ENCODE measurements at regions of chr9 and their contacts with region 1.

Region 1: GRCh38 chr9:97559111-97559514 is 57.6 kb downstream of the TMOD1 start:
- DNase-seq: no peak
- ATAC-seq: no peak
- H3K4me3 ChIP-seq: no peak overlapping the region
- H3K27ac ChIP-seq: peak overlapping the region; percentile 77 to 96 (median 86)
- H3K4me1 ChIP-seq: peaks cover 3 to 86% (median 59%) of the 10 kb centered on the region in 12 donors
- H3K27me3 ChIP-seq: no peaks in the 10 kb centered on the region
- CTCF ChIP-seq: no peak
- POLR2A ChIP-seq: no peak

Region 2: GRCh38 chr9:96859461-96860198 is 699.5 kb before region 1 on chr9:
- intact Hi-C with region 1: no loop called
- DNase-seq: no peak
- ATAC-seq: no peak
- H3K4me3 ChIP-seq: no peak overlapping the region
- H3K27ac ChIP-seq: no peak overlapping the region
- H3K4me1 ChIP-seq: peaks cover 0 to 4% (median 1%) of the 10 kb centered on the region in 12 donors
- H3K27me3 ChIP-seq: no peaks in the 10 kb centered on the region
- CTCF ChIP-seq: no peak
- POLR2A ChIP-seq: no peak

Region 3: DNA sequence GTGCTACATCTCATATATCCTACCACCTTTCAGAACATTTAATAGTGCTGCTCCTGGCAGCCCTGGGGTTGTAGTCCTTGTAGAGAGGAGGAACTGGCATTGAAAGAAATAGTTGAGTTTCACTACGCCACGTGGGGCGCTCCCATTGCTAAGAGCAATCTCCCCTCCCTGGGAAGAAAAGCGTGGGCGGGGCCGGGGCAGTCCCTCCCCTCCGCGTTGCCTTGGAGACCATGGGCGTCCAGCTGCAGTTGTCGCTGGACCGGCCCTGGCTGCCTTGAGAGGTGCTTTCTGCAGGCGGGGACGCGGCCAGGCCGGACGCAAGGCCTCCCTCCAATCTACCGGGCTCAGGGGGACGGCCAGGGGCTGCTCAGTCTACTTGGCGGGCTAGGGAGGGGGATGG is 252.0 kb before region 1 on chr9:
- intact Hi-C with region 1: no loop called
- DNase-seq: peak; percentile 83 to 90 (median 85)
- ATAC-seq: peak; percentile 71 to 96 (median 92)
- H3K4me3 ChIP-seq: peak overlapping the region in 10 of 12 donors; percentile 19 to 48 (median 36)
- H3K27ac ChIP-seq: peak overlapping the region in 3 of 12 donors; percentile 4 to 50 (median 19)
- H3K4me1 ChIP-seq: peaks cover 0 to 15% (median 4%) of the 10 kb centered on the region in 12 donors
- H3K27me3 ChIP-seq: peaks cover 0 to 8% (median 0%) of the 10 kb centered on the region in 9 donors
- CTCF ChIP-seq: peak in 7 of 12 donors; percentile 9 to 47 (median 26)
- POLR2A ChIP-seq: no peak

Region 4: GRCh38 chr9:97529363-97530076 is 29.6 kb before region 1 on chr9:
- intact Hi-C with region 1: loop called in 3 of 10 experiments (anchors 1 to 2 kb)
- DNase-seq: peak in 4 of 5 donors; percentile 64 to 82 (median 78)
- ATAC-seq: peak; percentile 85 to 91 (median 88)
- H3K4me3 ChIP-seq: no peak overlapping the region
- H3K27ac ChIP-seq: peak overlapping the region; percentile 67 to 91 (median 82)
- H3K4me1 ChIP-seq: peaks cover 0 to 64% (median 36%) of the 10 kb centered on the region in 12 donors
- H3K27me3 ChIP-seq: no peaks in the 10 kb centered on the region
- CTCF ChIP-seq: no peak
- POLR2A ChIP-seq: no peak